H1 (cell line): ENCODE measurements at regions of chr14 and their contacts with region 1.

Region 1: GRCh38 chr14:97978341-97978740 is 1181.2 kb downstream of the VRK1 start:
- DNase-seq: peak; percentile 71 to 73
- H3K4me3 ChIP-seq: peak overlapping the region; percentile 3 to 50 (median 12); a peak in 4 of 8 replicates
- H3K27ac ChIP-seq: no peak overlapping the region
- H3K4me1 ChIP-seq: no peaks in the 10 kb centered on the region; a peak in 1 of 7 replicates
- H3K27me3 ChIP-seq: 0 out of 7 replicates have a peak, but pooled peaks cover 0 to 4% (median 0%) of the 10 kb centered on the region in 4 experiments
- CTCF ChIP-seq: peak; percentile 52 to 68 (median 58)
- EP300 ChIP-seq: no peak
- POLR2A ChIP-seq: no peak
- RAD21 ChIP-seq: peak; percentile 79 to 85

Region 2: DNA sequence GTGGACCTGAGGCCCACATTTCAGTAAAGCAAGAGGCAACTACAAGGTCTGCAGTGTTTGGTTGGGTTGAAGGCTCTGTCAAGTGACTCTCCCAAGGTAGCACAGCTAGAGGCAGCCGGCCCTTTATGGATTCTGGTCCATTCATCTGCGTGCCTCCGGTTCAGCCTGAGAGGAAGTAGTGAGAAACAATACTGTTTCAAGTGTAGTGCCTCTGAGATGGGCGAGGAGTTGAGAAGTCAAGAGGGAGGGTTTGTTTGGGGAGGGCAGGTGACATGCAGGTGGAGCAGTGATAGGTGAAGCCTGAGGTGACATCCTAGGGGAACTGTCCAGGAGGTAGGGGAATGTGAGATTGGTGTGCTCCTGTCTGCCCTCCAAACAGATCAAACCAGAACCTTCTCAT is 247.6 kb before region 1 on chr14:
- CTCF ChIA-PET with region 1: no interaction called
- POLR2A ChIA-PET with region 1: no interaction called
- DNase-seq: no peak
- H3K4me3 ChIP-seq: no peak overlapping the region
- H3K27ac ChIP-seq: no peak overlapping the region
- H3K4me1 ChIP-seq: no peaks in the 10 kb centered on the region
- H3K27me3 ChIP-seq: no peaks in the 10 kb centered on the region
- CTCF ChIP-seq: no peak
- EP300 ChIP-seq: no peak
- POLR2A ChIP-seq: no peak
- RAD21 ChIP-seq: no peak

Region 3: GRCh38 chr14:98035396-98035795 is 57.1 kb after region 1 on chr14:
- CTCF ChIA-PET with region 1: no interaction called
- POLR2A ChIA-PET with region 1: no interaction called
- DNase-seq: no peak
- H3K4me3 ChIP-seq: no peak overlapping the region
- H3K27ac ChIP-seq: no peak overlapping the region
- H3K4me1 ChIP-seq: no peaks in the 10 kb centered on the region
- H3K27me3 ChIP-seq: peaks cover 0 to 1% (median 0%) of the 10 kb centered on the region in 4 experiments; a peak in 1 of 7 replicates
- CTCF ChIP-seq: no peak
- EP300 ChIP-seq: no peak
- POLR2A ChIP-seq: no peak
- RAD21 ChIP-seq: no peak

Region 4: DNA sequence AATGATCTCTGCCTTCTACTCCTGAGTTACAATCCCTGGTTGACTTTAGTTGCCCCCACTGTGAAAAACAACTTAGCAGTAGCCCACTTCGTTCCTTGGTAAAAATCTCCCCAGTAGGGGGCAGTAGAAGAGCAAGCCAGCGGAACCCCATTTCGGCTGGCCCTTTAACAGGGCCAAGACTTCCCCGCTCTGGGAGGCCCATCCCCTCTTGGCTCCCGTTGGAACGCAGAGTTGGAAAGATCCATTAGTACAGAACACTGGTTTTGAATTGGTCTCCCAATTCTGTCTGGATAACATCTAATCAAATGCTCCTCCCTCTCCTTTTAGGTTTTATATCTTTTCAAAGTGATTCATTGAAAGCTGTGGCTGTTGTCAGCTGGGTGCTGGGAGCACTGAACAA is 160.3 kb after region 1 on chr14:
- CTCF ChIA-PET with region 1: interaction called, 28 read pairs
- POLR2A ChIA-PET with region 1: no interaction called
- DNase-seq: peak; percentile 7 to 76
- H3K4me3 ChIP-seq: no peak overlapping the region
- H3K27ac ChIP-seq: no peak overlapping the region
- H3K4me1 ChIP-seq: peaks cover 1 to 9% (median 7%) of the 10 kb centered on the region in 4 experiments; a peak in 6 of 7 replicates
- H3K27me3 ChIP-seq: no peaks in the 10 kb centered on the region
- CTCF ChIP-seq: peak; percentile 53 to 77 (median 77)
- EP300 ChIP-seq: no peak
- POLR2A ChIP-seq: no peak
- RAD21 ChIP-seq: peak; percentile 89 to 92